Activated naive CD4-positive, alpha-beta T cell treated with anti-CD3 and anti-CD28 coated beads for 36 hours (primary cell): ENCODE measurements at regions of chr7 and their contacts with region 1.

Region 1: GRCh38 chr7:149624419-149625339 is 127.1 kb upstream of the ZNF746 start:
- DNase-seq: peak; percentile 93
- H3K4me3 Mint-ChIP-seq: peak overlapping the region; percentile 87
- H3K27ac Mint-ChIP-seq: peak overlapping the region; percentile 80
- H3K4me1 Mint-ChIP-seq: peaks cover 33% of the 10 kb centered on the region
- H3K27me3 Mint-ChIP-seq: no peaks in the 10 kb centered on the region

Region 2: DNA sequence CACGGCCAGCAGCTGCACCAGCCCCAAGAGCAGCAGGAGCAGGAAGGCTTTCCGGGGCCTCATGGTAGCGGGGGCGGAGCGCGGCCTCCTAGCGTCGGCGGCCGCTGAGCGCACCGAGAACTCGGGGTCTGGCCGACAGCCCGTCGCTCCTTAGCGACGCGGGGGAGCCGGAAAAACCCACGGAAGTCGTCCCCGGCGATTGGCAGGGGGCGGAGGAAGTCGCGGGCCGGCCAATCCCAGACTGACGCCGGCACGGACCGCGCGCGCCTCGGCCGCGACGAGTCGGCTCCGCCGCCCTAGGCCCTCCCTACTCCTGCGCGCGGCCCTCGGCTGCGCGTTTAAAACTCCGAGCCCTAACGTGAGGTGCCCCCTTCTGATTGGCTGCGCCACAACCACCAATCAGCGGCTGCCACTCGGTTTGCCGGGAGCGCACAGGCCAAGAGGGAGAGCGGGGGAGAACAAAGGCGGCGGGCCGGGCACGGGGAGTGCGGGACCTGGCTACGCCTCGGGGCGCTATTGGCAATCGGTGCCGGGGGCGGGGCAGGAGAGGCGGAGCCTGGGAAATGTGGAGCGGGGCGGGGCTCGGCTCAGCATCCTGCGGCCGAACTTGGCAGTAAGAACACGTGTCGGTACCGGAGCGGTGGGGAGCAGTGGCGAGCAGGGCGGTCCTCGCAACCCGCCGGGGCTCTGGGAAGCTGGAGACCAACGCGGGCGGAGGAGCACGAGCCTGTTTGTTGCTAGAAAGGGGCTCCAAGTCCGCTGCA is 596.2 kb before region 1 on chr7 and contains the start of gene PDIA4:
- CTCF ChIA-PET with region 1: no interaction called
- intact Hi-C with region 1: loop called (anchors 5 kb)
- DNase-seq: peak; percentile 100
- H3K4me3 Mint-ChIP-seq: peak within 1 kb of the TSS; percentile 95
- H3K27ac Mint-ChIP-seq: peak within 1 kb of the TSS; percentile 89
- H3K4me1 Mint-ChIP-seq: peaks cover 37% of the 10 kb centered on the region
- H3K27me3 Mint-ChIP-seq: no peaks in the 10 kb centered on the region
- total RNA-seq, gene PDIA4: 80.2 to 82.8 TPM

Region 3: GRCh38 chr7:149239345-149240191 is 385.1 kb before region 1 on chr7 and contains the start of gene ZNF212:
- CTCF ChIA-PET with region 1: no interaction called
- intact Hi-C with region 1: loop called (anchors 1 kb)
- DNase-seq: peak; percentile 93
- H3K4me3 Mint-ChIP-seq: peak within 1 kb of the TSS; percentile 89
- H3K27ac Mint-ChIP-seq: peak within 1 kb of the TSS; percentile 90
- H3K4me1 Mint-ChIP-seq: peaks cover 38% of the 10 kb centered on the region
- H3K27me3 Mint-ChIP-seq: no peaks in the 10 kb centered on the region
- total RNA-seq, gene ZNF212: 9.0 to 10.4 TPM

Region 4: GRCh38 chr7:149422129-149422913 is 202.4 kb before region 1 on chr7:
- CTCF ChIA-PET with region 1: interaction called, 4 read pairs
- intact Hi-C with region 1: loop called (anchors 1 kb)
- DNase-seq: peak; percentile 66
- H3K4me3 Mint-ChIP-seq: peak overlapping the region; percentile 67
- H3K27ac Mint-ChIP-seq: peak overlapping the region; percentile 65
- H3K4me1 Mint-ChIP-seq: peaks cover 7% of the 10 kb centered on the region
- H3K27me3 Mint-ChIP-seq: peaks cover 2% of the 10 kb centered on the region

Region 5: DNA sequence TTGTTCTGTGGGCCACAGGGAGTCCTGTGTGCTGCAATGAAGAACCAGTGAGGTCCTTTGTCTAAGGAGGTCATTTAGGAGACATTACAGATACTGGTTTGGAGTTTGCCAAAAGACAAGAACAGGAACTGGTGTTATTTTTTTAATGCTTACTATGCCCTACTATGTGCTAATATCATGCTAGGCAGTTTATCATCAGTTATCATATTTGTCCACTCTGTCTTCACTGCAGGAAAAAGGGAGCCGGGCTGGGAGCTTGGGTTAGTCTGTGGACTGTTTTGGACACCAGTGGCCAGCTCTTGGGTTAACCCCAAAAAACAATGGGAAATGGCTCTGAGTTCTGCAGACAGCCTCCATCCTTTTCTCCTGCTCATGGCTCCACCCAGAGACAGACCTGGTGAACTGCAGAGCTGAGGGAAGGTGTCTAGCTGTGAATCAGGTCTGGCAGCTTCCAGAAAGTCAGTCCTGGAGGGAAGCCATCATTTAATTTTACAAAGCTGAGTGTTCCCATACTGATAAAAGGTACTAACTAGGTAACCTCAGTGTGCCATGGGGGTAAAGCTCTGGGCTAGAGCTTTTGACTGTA is 25.9 kb before region 1 on chr7:
- CTCF ChIA-PET with region 1: interaction called, 7 read pairs
- intact Hi-C with region 1: loop called (anchors 1 kb)
- DNase-seq: peak; percentile 69
- H3K4me3 Mint-ChIP-seq: no peak overlapping the region
- H3K27ac Mint-ChIP-seq: peak overlapping the region; percentile 51
- H3K4me1 Mint-ChIP-seq: peaks cover 36% of the 10 kb centered on the region
- H3K27me3 Mint-ChIP-seq: no peaks in the 10 kb centered on the region

Region 6: DNA sequence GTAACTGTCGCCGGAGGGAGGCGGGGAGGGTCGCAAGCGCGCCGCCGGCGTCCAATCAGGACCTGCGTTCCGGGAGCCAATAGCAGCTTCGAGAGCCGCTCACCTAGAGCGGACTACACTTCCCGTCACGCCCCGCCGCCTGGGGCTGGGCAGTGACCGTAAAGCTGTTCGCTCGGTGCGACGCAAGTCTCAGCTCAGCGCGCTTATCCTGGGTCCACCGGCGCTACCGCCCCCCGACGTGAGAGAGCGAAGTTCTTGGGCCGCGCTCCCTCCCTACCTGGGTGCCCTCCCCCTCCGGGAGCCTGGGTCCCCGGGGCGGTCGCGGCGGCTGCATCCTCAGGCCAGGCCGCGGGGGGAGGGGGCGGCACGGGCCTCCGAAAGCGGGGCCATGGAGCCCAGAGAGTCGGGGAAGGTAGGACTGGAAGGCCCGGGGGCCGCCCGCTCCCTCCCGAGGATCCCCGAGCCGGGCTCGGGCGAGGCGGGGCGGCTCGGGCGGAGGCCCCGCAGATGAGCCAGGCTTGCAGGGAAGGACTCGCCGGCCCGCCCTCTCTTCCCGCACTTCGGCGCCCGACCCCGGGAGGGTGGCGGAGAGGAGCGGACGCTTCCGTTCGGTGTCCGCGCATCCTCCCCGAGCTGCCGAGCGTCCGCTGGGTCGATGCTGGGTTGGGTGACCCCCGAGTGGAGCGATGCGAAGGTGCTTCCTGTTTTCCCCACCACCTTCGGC is 213.7 kb after region 1 on chr7 and contains the start of gene ZNF862:
- CTCF ChIA-PET with region 1: no interaction called
- intact Hi-C with region 1: loop called (anchors 1 kb)
- DNase-seq: peak; percentile 96
- H3K4me3 Mint-ChIP-seq: peak within 1 kb of the TSS; percentile 76
- H3K27ac Mint-ChIP-seq: peak within 1 kb of the TSS; percentile 80
- H3K4me1 Mint-ChIP-seq: peaks cover 26% of the 10 kb centered on the region
- H3K27me3 Mint-ChIP-seq: no peaks in the 10 kb centered on the region
- total RNA-seq, gene ZNF862: 17.6 to 19.4 TPM